ENCODE measurements at regions of chr7 and their contacts with region 1.

Region 1: DNA sequence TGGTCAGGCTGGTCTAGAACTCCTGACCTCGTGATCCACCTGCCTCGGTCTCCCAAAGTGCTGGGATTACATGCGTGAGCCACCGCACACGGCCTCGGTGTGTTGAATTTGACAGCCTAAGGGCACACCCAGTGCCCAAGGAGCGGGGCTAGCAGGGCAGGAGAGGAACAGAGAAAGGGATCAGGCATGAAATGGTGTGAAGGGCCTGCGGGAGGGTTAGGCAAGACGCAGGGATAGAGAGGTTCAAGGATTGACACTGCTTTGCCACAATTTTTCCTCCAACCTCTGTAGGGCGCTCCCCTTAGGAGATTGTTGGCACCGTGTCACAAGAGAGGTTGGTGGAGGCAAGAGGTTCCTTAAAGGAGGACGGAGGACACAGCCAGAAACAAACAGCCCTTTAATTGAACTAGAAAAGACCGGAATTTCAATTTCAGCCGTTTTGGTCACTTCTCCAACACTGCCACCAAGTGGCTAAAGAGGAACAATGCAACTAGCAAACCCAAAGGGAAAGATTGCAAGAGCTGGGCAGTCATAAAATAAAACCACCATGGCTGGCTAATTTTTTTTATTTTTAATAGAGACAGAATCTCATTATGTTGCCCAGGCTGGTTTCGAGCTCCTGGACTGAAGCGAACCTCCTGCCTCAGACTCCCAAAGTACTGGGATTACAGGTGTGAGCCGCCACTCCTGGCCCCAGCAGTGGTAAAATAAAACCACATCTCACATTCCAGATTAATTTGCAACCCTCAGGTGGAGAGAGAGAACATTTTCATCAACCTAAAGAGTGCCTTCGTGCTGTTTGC is 6.9 kb upstream of the CREB3L2 start:
- DNase-seq: peak in 2 of 5 donors; percentile 27 to 35
- ATAC-seq: peak in 3 of 4 donors; percentile 60 to 66 (median 63)
- H3K4me3 ChIP-seq: no peak overlapping the region
- H3K27ac ChIP-seq: peak overlapping the region in 1 of 12 donors; percentile 10
- H3K4me1 ChIP-seq: peaks cover 0 to 3% (median 0%) of the 10 kb centered on the region in 12 donors
- H3K27me3 ChIP-seq: no peaks in the 10 kb centered on the region
- CTCF ChIP-seq: peak; percentile 81 to 95 (median 90)
- POLR2A ChIP-seq: no peak

Region 2: GRCh38 chr7:137606061-137606674 is 402.6 kb before region 1 on chr7:
- intact Hi-C with region 1: loop called in 2 of 10 experiments (anchors 2 to 5 kb)
- DNase-seq: no peak
- ATAC-seq: no peak
- H3K4me3 ChIP-seq: no peak overlapping the region
- H3K27ac ChIP-seq: no peak overlapping the region
- H3K4me1 ChIP-seq: peaks cover 0 to 6% (median 0%) of the 10 kb centered on the region in 12 donors
- H3K27me3 ChIP-seq: peaks cover 0 to 3% (median 0%) of the 10 kb centered on the region in 9 donors
- CTCF ChIP-seq: peak; percentile 32 to 71 (median 54)
- POLR2A ChIP-seq: no peak

Region 3: GRCh38 chr7:137656227-137656849 is 352.4 kb before region 1 on chr7:
- intact Hi-C with region 1: loop called (anchors 2 to 5 kb)
- DNase-seq: peak; percentile 73 to 85 (median 79)
- ATAC-seq: peak; percentile 70 to 90 (median 82)
- H3K4me3 ChIP-seq: no peak overlapping the region
- H3K27ac ChIP-seq: peak overlapping the region in 4 of 12 donors; percentile 3 to 28 (median 6)
- H3K4me1 ChIP-seq: peaks cover 0 to 25% (median 10%) of the 10 kb centered on the region in 12 donors
- H3K27me3 ChIP-seq: no peaks in the 10 kb centered on the region
- CTCF ChIP-seq: peak; percentile 76 to 91 (median 86)
- POLR2A ChIP-seq: no peak

Region 4: GRCh38 chr7:137661634-137662033 is 347.1 kb before region 1 on chr7:
- intact Hi-C with region 1: loop called (anchors 2 to 5 kb)
- DNase-seq: no peak
- ATAC-seq: no peak
- H3K4me3 ChIP-seq: no peak overlapping the region
- H3K27ac ChIP-seq: no peak overlapping the region
- H3K4me1 ChIP-seq: peaks cover 0 to 18% (median 7%) of the 10 kb centered on the region in 12 donors
- H3K27me3 ChIP-seq: no peaks in the 10 kb centered on the region
- CTCF ChIP-seq: no peak
- POLR2A ChIP-seq: no peak

Region 5: DNA sequence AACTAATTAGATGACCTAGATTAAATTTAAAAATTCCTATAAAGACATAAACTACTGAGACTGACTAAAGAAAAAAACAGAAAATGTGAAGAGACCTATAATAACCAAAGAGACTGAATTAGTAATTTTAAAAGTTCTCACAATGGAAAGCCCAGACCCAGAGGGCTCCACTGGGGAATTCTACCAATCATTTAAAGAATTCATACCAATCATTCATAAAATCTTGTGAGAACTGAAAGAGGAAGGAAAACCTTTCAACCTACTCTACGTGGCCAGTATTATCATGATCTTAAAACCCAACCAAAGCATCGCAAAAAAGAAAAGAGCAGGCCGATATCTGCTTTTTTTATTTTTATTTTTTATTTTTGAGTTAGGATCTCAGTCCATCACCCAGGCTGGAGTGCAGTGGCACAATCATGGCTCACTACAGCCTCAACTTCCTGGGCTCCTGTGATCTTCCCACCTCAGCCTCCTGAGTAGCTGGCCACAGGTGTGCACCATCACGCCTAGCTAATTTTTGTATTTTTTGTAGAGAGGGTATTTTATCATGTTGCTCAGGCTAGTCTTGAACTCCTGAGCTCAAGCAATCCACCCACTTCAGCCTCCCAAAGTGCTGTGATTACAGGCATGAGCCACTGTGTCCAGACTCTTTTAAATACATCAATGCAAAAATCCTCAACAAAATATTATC is 210.5 kb before region 1 on chr7:
- intact Hi-C with region 1: no loop called
- DNase-seq: no peak
- ATAC-seq: no peak
- H3K4me3 ChIP-seq: no peak overlapping the region
- H3K27ac ChIP-seq: no peak overlapping the region
- H3K4me1 ChIP-seq: no peaks in the 10 kb centered on the region
- H3K27me3 ChIP-seq: no peaks in the 10 kb centered on the region
- CTCF ChIP-seq: no peak
- POLR2A ChIP-seq: no peak

Measured in heart left ventricle (tissue), 16 donors.